ENCODE measurements at regions of chr12 and their contacts with region 1.

Region 1: DNA sequence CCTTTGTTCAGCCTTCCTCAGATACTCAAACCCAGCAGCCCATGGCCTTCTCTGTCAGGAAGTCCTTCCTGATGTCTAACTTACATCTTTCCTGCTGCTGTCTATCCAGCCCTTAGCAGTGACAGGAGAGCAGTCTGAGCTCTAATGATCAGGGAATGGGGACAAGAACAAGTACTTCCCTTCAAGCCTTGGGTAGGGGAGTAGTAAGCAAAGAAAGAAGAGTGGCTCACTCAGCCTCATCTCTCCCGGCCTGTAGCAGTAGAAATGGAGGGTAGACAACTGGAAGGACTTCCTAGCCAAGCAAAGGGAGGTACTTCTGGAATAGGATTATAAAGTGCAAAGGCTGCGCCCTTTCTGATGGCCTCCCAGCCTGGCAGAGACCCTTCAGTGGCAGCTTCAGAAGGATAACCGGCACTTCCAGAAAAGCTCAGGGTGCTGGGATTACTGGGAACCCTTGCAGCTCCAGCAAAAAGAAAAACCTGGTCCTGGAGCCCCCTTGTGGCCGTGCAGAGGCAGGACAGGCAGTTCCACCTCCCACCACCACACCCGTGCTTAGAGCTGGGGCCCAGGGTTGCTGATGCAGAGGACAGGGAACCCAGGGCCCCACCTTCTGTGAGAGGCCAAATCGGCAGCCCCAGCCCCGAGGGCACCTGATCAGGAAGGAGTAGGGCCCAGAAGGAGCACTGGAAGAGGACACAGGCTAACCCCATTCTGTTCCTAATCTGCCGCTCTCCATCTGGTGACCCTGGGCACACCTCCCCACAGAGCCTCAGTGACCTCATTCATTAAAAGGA is 12.4 kb upstream of the SMUG1 start:
- DNase-seq: peak; percentile 65
- ATAC-seq: peak; percentile 98
- H3K4me3 ChIP-seq: no peak overlapping the region
- H3K27ac ChIP-seq: no peak overlapping the region
- H3K4me1 ChIP-seq: peaks cover 0 to 9% of the 10 kb centered on the region in 2 experiments; a peak in 1 of 4 replicates
- H3K27me3 ChIP-seq: no peaks in the 10 kb centered on the region
- CTCF ChIP-seq: peak; percentile 95 to 99 (median 98)
- POLR2A ChIP-seq: no peak
- RAD21 ChIP-seq: peak; percentile 76

Region 2: DNA sequence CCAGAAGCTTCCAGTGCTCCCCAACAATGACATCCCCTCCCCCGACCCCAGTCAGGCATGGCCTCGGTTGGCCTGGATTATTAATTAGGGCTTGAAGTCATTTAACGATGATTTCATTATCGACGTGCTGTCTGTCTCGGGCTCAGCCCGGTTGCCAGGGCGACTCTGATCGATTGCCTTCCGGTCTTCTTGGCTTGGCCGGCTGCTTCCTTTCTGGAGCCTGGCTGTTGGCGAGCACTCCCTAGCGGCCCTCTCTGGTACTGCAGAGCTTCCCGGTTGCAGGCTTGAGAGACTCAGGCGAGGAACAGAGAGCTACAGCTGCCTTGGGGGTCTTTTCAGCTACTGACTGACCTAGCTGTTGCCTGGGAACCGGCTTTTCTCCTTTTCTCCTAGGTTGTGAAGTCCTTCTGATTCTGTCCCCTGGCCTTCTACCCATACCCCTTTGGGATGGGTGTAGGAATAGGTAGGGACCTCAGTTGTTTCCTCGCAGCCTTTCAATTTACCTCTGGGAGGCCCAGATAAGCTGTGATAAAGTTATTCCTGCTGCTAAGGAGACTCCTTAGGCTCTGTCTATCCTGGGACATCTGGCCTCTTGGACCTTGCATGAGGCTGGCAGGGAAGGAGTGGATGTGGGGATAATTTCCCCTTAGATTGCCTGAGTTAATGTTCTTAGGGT is 444.0 kb before region 1 on chr12:
- CTCF ChIA-PET with region 1: interaction called, 11 read pairs
- POLR2A ChIA-PET with region 1: no interaction called
- RAD21 ChIA-PET with region 1: no interaction called
- intact Hi-C with region 1: no loop called
- DNase-seq: peak; percentile 58
- ATAC-seq: peak; percentile 92
- H3K4me3 ChIP-seq: peak overlapping the region in 1 of 2 experiments; percentile 37; a peak in 1 of 4 replicates
- H3K27ac ChIP-seq: no peak overlapping the region
- H3K4me1 ChIP-seq: peaks cover 3 to 13% of the 10 kb centered on the region in 2 experiments; a peak in 3 of 4 replicates
- H3K27me3 ChIP-seq: peaks cover 6% of the 10 kb centered on the region; the same call in 1 of the 2 replicates
- CTCF ChIP-seq: peak; percentile 62 to 98 (median 95); a peak in 5 of 6 replicates
- POLR2A ChIP-seq: no peak
- RAD21 ChIP-seq: peak; percentile 64

Region 3: GRCh38 chr12:53984901-53985709 is 216.1 kb before region 1 on chr12 and contains the start of gene HOXC10:
- CTCF ChIA-PET with region 1: interaction called, 35 read pairs
- POLR2A ChIA-PET with region 1: no interaction called
- RAD21 ChIA-PET with region 1: interaction called in 1 of 2 experiments, 4 read pairs
- intact Hi-C with region 1: loop called (anchors 2 kb)
- DNase-seq: peak; percentile 93
- ATAC-seq: peak; percentile 87
- H3K4me3 ChIP-seq: peak within 1 kb of the TSS in 1 of 2 experiments; percentile 30; a peak in 2 of 4 replicates
- H3K27ac ChIP-seq: no peak within 1 kb of the TSS
- H3K4me1 ChIP-seq: peaks cover 4 to 17% of the 10 kb centered on the region in 2 experiments
- H3K27me3 ChIP-seq: no peaks in the 10 kb centered on the region
- CTCF ChIP-seq: peak; percentile 76 to 86 (median 82)
- POLR2A ChIP-seq: no peak
- RAD21 ChIP-seq: peak; percentile 87
- total RNA-seq, gene HOXC10: 3.8 TPM

Region 4: DNA sequence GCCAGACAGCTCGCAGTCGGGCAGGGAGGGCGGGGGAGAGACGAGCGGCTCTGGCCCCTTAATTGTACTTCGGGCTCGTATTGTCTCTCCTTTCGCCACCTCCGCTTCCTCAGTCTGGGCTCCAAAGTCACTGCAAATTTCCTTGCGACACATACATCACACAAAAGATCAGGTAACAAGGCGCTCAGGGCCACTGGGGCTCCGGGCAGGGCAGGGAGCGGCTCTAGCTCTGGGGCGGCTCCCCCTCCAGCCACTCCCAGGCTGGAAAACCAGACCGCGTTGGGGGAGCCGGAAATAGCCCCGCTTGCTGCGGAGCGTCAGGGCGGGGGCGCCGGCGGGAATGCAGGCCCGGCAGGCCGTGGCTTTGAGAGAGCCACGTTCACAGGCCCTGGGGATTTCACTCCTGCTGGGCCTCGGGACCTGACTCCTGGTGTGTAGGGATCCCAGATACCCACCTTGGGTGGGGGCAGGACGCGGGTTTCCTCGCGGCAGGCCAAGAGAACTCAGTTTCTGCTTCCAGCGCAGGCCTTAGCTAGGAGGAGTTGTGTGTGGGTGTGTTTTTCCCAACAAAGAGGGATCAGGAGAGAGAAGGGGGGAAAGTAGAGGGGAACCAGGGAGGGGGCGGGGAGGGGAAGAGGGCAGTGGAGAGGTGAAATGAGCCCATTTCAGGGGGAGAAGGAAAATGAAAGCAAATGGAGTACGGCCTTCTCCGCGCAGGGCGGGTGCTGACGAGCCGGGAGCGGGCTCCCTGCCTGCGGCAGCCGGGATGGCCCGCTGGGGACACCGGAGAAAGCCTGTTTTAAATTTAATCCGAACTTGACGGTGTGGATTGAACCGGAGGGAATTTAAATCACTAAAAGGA is 205.6 kb before region 1 on chr12:
- CTCF ChIA-PET with region 1: interaction called, 22 read pairs
- POLR2A ChIA-PET with region 1: no interaction called
- RAD21 ChIA-PET with region 1: interaction called in 1 of 2 experiments, 3 read pairs
- intact Hi-C with region 1: no loop called
- DNase-seq: no peak
- ATAC-seq: peak; percentile 78
- H3K4me3 ChIP-seq: peak overlapping the region; percentile 78 to 85
- H3K27ac ChIP-seq: peak overlapping the region; percentile 81
- H3K4me1 ChIP-seq: peaks cover 17 to 35% of the 10 kb centered on the region in 2 experiments; a peak in 3 of 4 replicates
- H3K27me3 ChIP-seq: no peaks in the 10 kb centered on the region
- CTCF ChIP-seq: no peak
- POLR2A ChIP-seq: peak; percentile 61
- RAD21 ChIP-seq: no peak

Region 5: DNA sequence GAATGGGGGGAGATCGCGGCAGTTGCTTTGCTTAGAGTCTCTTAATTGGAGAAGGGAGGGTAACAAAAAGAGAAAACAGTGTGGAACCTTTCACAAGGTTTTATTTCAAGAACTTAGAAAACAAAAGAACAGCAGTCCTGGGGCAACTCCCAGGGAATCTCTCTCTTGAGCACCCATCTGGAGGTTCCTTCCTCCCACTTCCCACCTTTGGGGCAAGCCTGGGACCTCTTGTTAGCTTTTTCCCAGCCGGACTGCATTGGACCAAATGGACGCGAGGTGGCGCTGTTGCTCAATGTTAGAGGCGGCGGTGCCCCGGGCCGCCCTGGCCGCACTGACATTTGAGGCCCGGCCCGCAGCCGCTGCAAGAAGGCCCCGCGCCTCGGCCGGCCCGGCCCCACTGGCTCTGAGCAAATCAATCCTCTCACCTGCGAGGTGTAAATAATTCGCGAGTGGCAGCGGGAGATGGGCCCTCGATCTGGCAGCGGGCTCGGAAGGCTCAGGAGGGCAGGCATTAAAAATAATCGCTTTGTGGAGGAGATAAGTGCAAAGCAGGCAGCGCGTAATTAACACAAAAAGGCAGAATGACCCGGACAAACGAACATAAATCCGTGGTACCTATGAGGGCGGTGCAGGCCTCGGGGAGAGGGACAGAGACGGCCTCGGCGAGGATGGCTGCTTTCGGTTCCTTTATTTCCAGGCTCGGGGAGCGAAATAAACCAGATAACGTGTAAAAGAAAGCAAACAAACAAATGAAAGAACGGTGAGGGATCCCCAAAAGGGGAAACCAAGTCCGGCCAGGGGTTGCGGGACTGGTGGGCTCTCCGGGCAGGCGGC is 195.1 kb before region 1 on chr12:
- CTCF ChIA-PET with region 1: interaction called, 68 read pairs
- POLR2A ChIA-PET with region 1: interaction called, 3 read pairs
- RAD21 ChIA-PET with region 1: interaction called in 1 of 2 experiments, 18 read pairs
- intact Hi-C with region 1: loop called (anchors 1 kb)
- DNase-seq: no peak
- ATAC-seq: peak; percentile 94
- H3K4me3 ChIP-seq: no peak overlapping the region
- H3K27ac ChIP-seq: no peak overlapping the region
- H3K4me1 ChIP-seq: peaks cover 2 to 12% of the 10 kb centered on the region in 2 experiments
- H3K27me3 ChIP-seq: no peaks in the 10 kb centered on the region
- CTCF ChIP-seq: peak; percentile 80 to 97 (median 93)
- POLR2A ChIP-seq: no peak
- RAD21 ChIP-seq: peak; percentile 98

Region 6: GRCh38 chr12:54017878-54018467 is 183.2 kb before region 1 on chr12:
- CTCF ChIA-PET with region 1: interaction called, 11 read pairs
- POLR2A ChIA-PET with region 1: interaction called, 6 read pairs
- RAD21 ChIA-PET with region 1: interaction called in 1 of 2 experiments, 4 read pairs
- intact Hi-C with region 1: no loop called
- DNase-seq: peak; percentile 84
- ATAC-seq: peak; percentile 80
- H3K4me3 ChIP-seq: peak overlapping the region; percentile 76 to 88
- H3K27ac ChIP-seq: peak overlapping the region; percentile 94
- H3K4me1 ChIP-seq: peaks cover 24 to 44% of the 10 kb centered on the region in 2 experiments
- H3K27me3 ChIP-seq: no peaks in the 10 kb centered on the region
- CTCF ChIP-seq: no peak
- POLR2A ChIP-seq: peak; percentile 56
- RAD21 ChIP-seq: no peak

Region 7: GRCh38 chr12:54032627-54033100 is 168.5 kb before region 1 on chr12 and contains the start of gene HOXC5:
- CTCF ChIA-PET with region 1: interaction called, 40 read pairs
- POLR2A ChIA-PET with region 1: interaction called, 3 read pairs
- RAD21 ChIA-PET with region 1: interaction called, 9 read pairs
- intact Hi-C with region 1: loop called (anchors 1 kb)
- DNase-seq: peak; percentile 54
- ATAC-seq: peak; percentile 53
- H3K4me3 ChIP-seq: peak within 1 kb of the TSS; percentile 55 to 77
- H3K27ac ChIP-seq: peak within 1 kb of the TSS; percentile 35
- H3K4me1 ChIP-seq: peaks cover 7 to 29% of the 10 kb centered on the region in 2 experiments
- H3K27me3 ChIP-seq: no peaks in the 10 kb centered on the region
- CTCF ChIP-seq: peak; percentile 88 to 98 (median 94)
- POLR2A ChIP-seq: no peak
- RAD21 ChIP-seq: peak; percentile 88
- total RNA-seq, gene HOXC5: 1.1 TPM

Region 8: GRCh38 chr12:54240971-54241588 is 39.9 kb after region 1 on chr12:
- CTCF ChIA-PET with region 1: no interaction called
- POLR2A ChIA-PET with region 1: no interaction called
- RAD21 ChIA-PET with region 1: no interaction called
- intact Hi-C with region 1: no loop called
- DNase-seq: no peak
- ATAC-seq: no peak
- H3K4me3 ChIP-seq: no peak overlapping the region
- H3K27ac ChIP-seq: no peak overlapping the region
- H3K4me1 ChIP-seq: no peaks in the 10 kb centered on the region
- H3K27me3 ChIP-seq: no peaks in the 10 kb centered on the region
- CTCF ChIP-seq: no peak
- POLR2A ChIP-seq: no peak
- RAD21 ChIP-seq: no peak

Region 9: DNA sequence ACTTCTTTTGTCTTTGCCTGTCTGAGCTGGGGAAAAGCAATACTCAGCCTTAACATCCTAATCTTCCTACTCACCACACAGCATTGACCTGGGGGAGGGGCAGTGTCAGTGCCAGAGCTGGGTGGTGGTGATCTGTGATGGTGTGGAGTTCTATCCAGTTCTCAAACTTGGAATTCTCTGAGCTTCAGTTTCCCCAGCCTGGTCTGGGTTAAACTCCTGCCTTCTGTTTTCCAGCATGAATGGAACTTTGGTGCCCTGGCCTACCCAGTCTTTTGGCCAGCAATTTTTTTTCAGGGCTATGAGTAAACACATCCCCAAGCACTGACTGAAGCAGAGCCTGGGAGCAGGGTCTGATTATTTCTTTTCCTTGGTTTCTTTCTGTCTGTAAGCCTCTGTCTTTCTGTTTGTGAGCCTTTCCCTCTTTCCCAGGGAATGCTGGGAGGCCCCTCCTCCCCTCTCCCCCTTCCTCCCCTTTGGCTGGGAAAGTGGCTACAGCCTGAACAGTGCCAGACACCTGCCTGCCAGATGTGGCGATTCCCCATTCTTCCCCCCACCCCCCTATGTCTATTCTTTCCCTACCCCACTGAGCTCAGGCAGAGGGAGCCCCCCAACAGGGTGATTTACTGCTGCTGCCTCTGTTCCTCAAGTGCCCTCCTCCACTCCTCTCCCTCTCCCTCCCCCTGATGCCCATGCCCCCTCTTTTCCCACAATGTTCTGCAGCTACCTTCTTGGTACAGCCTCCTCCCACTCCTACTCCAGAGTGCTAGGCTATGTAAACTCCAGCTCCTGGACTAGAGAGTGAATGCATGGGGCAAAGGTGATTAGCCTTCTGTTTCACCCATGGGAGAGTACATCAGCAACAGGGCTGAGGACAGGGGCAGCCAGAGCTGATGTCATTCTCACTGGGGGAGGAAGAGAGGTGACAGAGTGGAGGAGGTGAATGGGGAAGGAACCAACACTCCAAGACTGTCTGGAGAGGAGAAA is 152.0 kb after region 1 on chr12:
- CTCF ChIA-PET with region 1: no interaction called
- POLR2A ChIA-PET with region 1: no interaction called
- RAD21 ChIA-PET with region 1: no interaction called
- intact Hi-C with region 1: no loop called
- DNase-seq: no peak
- ATAC-seq: no peak
- H3K4me3 ChIP-seq: no peak overlapping the region
- H3K27ac ChIP-seq: no peak overlapping the region
- H3K4me1 ChIP-seq: peaks cover 8 to 12% of the 10 kb centered on the region in 2 experiments
- H3K27me3 ChIP-seq: no peaks in the 10 kb centered on the region
- CTCF ChIP-seq: no peak
- POLR2A ChIP-seq: no peak
- RAD21 ChIP-seq: no peak

Region 10: GRCh38 chr12:54680374-54680773 is 479.2 kb after region 1 on chr12:
- CTCF ChIA-PET with region 1: no interaction called
- POLR2A ChIA-PET with region 1: no interaction called
- RAD21 ChIA-PET with region 1: no interaction called
- intact Hi-C with region 1: no loop called
- DNase-seq: peak; percentile 56
- ATAC-seq: peak; percentile 98
- H3K4me3 ChIP-seq: no peak overlapping the region
- H3K27ac ChIP-seq: no peak overlapping the region
- H3K4me1 ChIP-seq: 0 out of 4 replicates have a peak, but pooled peaks cover 0 to 2% of the 10 kb centered on the region in 2 experiments
- H3K27me3 ChIP-seq: peaks cover 54% of the 10 kb centered on the region
- CTCF ChIP-seq: peak; percentile 8 to 80 (median 74); a peak in 4 of 6 replicates
- POLR2A ChIP-seq: no peak
- RAD21 ChIP-seq: 0 out of 2 replicates have a peak, but pooled peaks have one; percentile 6

Region 11: GRCh38 chr12:54773590-54773989 is 572.4 kb after region 1 on chr12:
- CTCF ChIA-PET with region 1: no interaction called
- POLR2A ChIA-PET with region 1: no interaction called
- RAD21 ChIA-PET with region 1: no interaction called
- intact Hi-C with region 1: no loop called
- DNase-seq: no peak
- ATAC-seq: no peak
- H3K4me3 ChIP-seq: no peak overlapping the region
- H3K27ac ChIP-seq: no peak overlapping the region
- H3K4me1 ChIP-seq: no peaks in the 10 kb centered on the region
- H3K27me3 ChIP-seq: peaks cover 32% of the 10 kb centered on the region
- CTCF ChIP-seq: peak in 2 of 3 experiments; percentile 14 to 36; a peak in 3 of 6 replicates
- POLR2A ChIP-seq: no peak
- RAD21 ChIP-seq: no peak